ENCODE measurements at regions of chr18 and their contacts with region 1.

Region 1: GRCh38 chr18:74551936-74552555 is 17.7 kb downstream of the CNDP1 start:
- DNase-seq: peak; percentile 70 to 71
- H3K4me3 ChIP-seq: no peak overlapping the region
- H3K4me3 Mint-ChIP-seq: no peak overlapping the region
- H3K27ac Mint-ChIP-seq: no peak overlapping the region
- H3K4me1 ChIP-seq: no peaks in the 10 kb centered on the region
- H3K4me1 Mint-ChIP-seq: no peaks in the 10 kb centered on the region
- H3K27me3 ChIP-seq: no peaks in the 10 kb centered on the region
- H3K27me3 Mint-ChIP-seq: no peaks in the 10 kb centered on the region
- CTCF ChIP-seq: peak; percentile 50 to 57

Region 2: DNA sequence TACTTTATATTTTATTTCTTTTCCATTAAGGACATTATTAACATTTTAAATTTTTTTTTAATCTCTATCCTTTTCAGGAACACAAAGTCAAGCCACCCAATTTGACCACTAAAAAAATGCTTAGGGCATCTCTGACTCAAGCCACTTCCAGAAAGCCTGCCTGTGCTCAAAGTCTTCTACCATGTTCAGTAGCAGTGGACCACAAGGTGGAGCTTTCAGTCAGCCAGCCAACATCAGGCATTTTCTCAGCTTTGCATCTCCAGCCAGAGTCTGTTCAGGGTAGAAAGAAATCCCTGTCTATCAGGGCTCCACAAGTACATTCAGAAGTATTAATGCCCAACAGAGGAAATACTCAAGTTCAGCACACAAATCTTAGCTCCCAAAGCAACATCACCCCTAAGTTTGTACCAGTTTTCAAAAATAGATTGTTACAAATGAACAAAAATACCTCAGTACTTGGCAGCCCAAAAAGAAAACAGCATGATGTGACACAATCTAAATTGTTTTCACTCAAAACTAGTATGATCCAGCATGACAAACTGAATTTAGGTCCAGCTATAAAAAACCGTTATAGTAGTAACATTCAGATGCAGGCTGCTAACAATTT is 198.8 kb before region 1 on chr18:
- CTCF ChIA-PET with region 1: interaction called, 5 read pairs
- POLR2A ChIA-PET with region 1: no interaction called
- intact Hi-C with region 1: loop called (anchors 1 kb)
- DNase-seq: peak; percentile 39 to 45
- H3K4me3 ChIP-seq: no peak overlapping the region
- H3K4me3 Mint-ChIP-seq: no peak overlapping the region
- H3K27ac Mint-ChIP-seq: no peak overlapping the region
- H3K4me1 ChIP-seq: no peaks in the 10 kb centered on the region
- H3K4me1 Mint-ChIP-seq: no peaks in the 10 kb centered on the region
- H3K27me3 ChIP-seq: no peaks in the 10 kb centered on the region
- H3K27me3 Mint-ChIP-seq: no peaks in the 10 kb centered on the region
- CTCF ChIP-seq: peak; percentile 44 to 73

Region 3: DNA sequence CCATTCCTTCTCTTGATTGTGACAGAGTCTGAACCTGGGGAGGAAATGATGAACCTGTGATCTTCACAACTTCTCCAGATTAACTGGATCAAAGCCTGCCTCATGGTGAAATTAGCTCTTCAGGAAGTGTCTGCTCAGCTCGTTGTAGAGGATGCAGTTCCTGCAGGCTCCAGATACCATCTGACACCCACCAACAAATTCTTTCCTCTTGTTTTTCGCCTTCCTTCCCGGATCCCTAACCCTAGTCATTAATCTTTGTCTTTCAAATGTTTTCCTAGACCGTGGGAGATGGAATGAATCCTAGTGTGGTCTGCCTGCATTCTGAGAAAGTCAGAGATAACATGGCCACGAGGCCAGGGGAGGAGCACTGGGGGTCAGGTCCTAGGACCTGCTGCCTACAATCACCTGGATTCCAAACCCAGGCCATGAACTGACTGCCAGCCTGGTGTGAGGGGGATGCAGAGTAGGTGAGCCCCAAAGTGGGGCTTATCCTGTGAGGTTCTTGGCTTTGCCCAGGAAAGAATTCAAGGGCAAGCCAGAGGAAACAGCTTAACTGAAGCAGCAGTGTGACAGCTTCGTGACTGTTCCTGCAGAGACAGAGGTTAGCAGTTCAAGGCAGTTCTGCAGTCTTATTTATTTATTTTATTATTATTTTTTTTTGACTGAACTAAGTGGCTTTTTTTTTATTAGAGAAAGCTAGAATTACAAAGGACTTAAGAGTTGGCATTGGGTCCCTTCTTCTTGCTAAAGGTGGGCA is 162.7 kb before region 1 on chr18:
- CTCF ChIA-PET with region 1: interaction called, 4 read pairs
- POLR2A ChIA-PET with region 1: no interaction called
- intact Hi-C with region 1: loop called (anchors 1 kb)
- DNase-seq: no peak
- H3K4me3 ChIP-seq: no peak overlapping the region
- H3K4me3 Mint-ChIP-seq: no peak overlapping the region
- H3K27ac Mint-ChIP-seq: no peak overlapping the region
- H3K4me1 ChIP-seq: no peaks in the 10 kb centered on the region
- H3K4me1 Mint-ChIP-seq: no peaks in the 10 kb centered on the region
- H3K27me3 ChIP-seq: no peaks in the 10 kb centered on the region; the same call in 1 of the 2 replicates
- H3K27me3 Mint-ChIP-seq: peaks cover 3% of the 10 kb centered on the region
- CTCF ChIP-seq: no peak

Region 4: GRCh38 chr18:74486119-74486849 is 65.8 kb before region 1 on chr18:
- CTCF ChIA-PET with region 1: no interaction called
- POLR2A ChIA-PET with region 1: no interaction called
- intact Hi-C with region 1: no loop called
- DNase-seq: no peak
- H3K4me3 ChIP-seq: no peak overlapping the region
- H3K4me3 Mint-ChIP-seq: no peak overlapping the region
- H3K27ac Mint-ChIP-seq: no peak overlapping the region
- H3K4me1 ChIP-seq: no peaks in the 10 kb centered on the region
- H3K4me1 Mint-ChIP-seq: no peaks in the 10 kb centered on the region
- H3K27me3 ChIP-seq: no peaks in the 10 kb centered on the region
- H3K27me3 Mint-ChIP-seq: no peaks in the 10 kb centered on the region
- CTCF ChIP-seq: no peak

Region 5: DNA sequence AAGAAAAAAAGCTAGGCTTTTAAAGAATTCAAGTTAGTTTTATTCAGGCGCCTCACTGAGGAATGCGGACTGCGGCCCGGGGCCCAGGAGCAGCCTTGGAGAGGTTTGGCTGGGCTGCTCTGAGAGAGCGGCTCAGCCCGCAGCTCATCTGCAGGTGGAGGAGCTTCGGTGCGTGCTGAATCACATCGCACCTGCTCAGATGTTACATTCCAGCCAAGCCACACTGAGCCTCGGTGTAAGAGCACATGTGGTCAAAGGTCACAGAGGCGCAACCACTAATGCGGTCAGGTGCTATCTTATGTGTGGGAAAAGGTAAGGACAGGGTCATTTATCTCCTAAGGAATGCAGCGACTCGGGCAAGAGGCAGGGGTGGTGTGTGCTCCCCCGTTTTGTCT is 34.8 kb before region 1 on chr18:
- CTCF ChIA-PET with region 1: interaction called, 11 read pairs
- POLR2A ChIA-PET with region 1: interaction called, 3 read pairs
- intact Hi-C with region 1: no loop called
- DNase-seq: peak; percentile 81 to 93
- H3K4me3 ChIP-seq: no peak overlapping the region
- H3K4me3 Mint-ChIP-seq: peak overlapping the region; percentile 45
- H3K27ac Mint-ChIP-seq: peak overlapping the region; percentile 96
- H3K4me1 ChIP-seq: peaks cover 33% of the 10 kb centered on the region
- H3K4me1 Mint-ChIP-seq: peaks cover 6% of the 10 kb centered on the region
- H3K27me3 ChIP-seq: no peaks in the 10 kb centered on the region
- H3K27me3 Mint-ChIP-seq: no peaks in the 10 kb centered on the region
- CTCF ChIP-seq: no peak

Measured in Caco-2 (cell line).